Activated B cell treated with CpG ODN at 0.5 μM for 24 hours (primary cell): ENCODE measurements at regions of chr9 and their contacts with region 1.

Region 1: DNA sequence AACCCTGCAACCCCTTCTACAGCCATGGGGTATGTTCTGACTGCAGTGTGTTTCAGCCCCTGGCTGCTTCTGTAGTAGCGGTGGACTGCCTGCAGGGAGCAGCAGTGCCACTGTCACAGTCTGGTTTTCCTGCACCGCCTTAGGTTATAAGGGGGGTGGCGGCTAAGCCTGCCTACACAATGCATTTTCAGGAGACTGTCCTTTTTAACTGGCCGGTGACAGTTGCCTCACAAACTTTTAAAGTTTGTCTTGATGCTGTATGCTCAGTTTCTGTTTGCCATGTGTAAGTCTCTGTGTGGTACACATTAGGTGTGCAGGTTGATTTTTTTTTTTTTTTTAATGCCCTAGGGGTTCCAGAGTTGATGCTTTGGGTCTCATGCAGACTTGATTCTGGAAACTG is 53.0 kb downstream of the NUP214 start:
- DNase-seq: peak; percentile 61
- ATAC-seq: peak; percentile 97
- H3K4me3 Mint-ChIP-seq: no peak overlapping the region
- H3K27ac Mint-ChIP-seq: no peak overlapping the region
- H3K4me1 Mint-ChIP-seq: peaks cover 44% of the 10 kb centered on the region
- H3K27me3 Mint-ChIP-seq: no peaks in the 10 kb centered on the region
- CTCF ChIP-seq: peak; percentile 54

Region 2: DNA sequence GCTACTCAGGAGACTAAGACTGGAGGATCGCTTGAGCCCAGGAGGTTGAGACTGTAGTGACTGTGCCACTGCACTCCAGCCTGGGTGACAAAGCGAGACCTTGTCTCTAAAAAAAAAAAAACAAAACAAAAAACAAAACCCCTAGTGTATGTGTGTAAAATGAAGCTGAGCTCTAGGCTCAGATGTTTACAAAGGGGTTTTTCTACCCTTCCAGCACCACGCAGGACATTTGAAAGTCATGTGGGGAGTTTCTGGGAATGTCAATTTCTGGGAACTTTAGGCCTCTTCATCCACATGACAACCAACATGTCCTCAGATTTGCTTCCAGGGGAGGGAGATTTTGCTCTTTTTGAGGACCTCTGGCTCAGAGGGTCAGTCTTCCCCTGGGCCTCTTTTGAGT is 124.5 kb before region 1 on chr9:
- CTCF ChIA-PET with region 1: interaction called, 3 read pairs
- POLR2A ChIA-PET with region 1: no interaction called
- intact Hi-C with region 1: loop called (anchors 2 kb)
- DNase-seq: no peak
- ATAC-seq: no peak
- H3K4me3 Mint-ChIP-seq: no peak overlapping the region
- H3K27ac Mint-ChIP-seq: no peak overlapping the region
- H3K4me1 Mint-ChIP-seq: no peaks in the 10 kb centered on the region
- H3K27me3 Mint-ChIP-seq: peaks cover 4% of the 10 kb centered on the region
- CTCF ChIP-seq: no peak

Region 3: GRCh38 chr9:131277910-131278701 is 99.7 kb after region 1 on chr9:
- CTCF ChIA-PET with region 1: interaction called, 9 read pairs
- POLR2A ChIA-PET with region 1: interaction called, 10 read pairs
- intact Hi-C with region 1: loop called (anchors 1 kb)
- DNase-seq: peak; percentile 48
- ATAC-seq: peak; percentile 48
- H3K4me3 Mint-ChIP-seq: peak overlapping the region; percentile 91
- H3K27ac Mint-ChIP-seq: peak overlapping the region; percentile 80
- H3K4me1 Mint-ChIP-seq: peaks cover 37% of the 10 kb centered on the region
- H3K27me3 Mint-ChIP-seq: peaks cover 12% of the 10 kb centered on the region
- CTCF ChIP-seq: no peak

Region 4: DNA sequence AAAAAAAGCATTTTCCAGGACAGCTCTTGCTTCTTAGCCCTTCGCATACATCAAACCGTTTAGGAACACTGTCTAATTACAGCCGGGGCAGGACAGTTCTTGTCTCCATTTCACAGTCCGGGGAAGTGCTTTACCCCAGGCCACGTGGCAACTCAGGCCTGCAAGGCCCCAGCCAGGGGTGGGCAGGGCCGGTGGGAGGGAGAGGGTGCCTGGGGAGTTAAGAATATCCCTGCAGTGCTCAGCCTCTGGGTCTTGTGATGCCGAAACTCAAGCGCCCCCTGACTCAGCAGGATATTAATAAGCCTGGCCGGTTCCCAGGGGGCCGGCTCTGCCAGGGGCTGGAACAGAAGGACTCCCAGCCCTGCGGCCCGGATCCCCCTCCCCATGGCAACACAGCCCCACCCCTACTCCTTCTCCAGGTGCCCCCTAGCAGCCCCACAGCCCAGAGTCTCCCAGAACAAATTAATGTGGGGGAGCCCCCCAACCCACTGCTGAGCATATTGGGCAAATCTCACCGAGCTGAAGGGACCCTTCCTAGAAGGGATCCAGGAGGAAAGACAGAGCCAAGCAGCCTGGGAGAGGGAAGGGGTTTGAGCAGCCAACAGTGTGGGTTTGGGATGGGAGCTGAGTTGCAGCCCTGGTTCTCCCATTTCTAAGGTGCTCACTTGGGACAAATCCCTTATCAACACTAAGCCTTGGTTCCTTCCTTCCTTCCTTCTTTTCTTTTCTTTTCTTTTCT is 156.4 kb after region 1 on chr9:
- CTCF ChIA-PET with region 1: interaction called, 198 read pairs
- POLR2A ChIA-PET with region 1: interaction called, 11 read pairs
- intact Hi-C with region 1: loop called (anchors 1 kb)
- DNase-seq: no peak
- ATAC-seq: no peak
- H3K4me3 Mint-ChIP-seq: no peak overlapping the region
- H3K27ac Mint-ChIP-seq: no peak overlapping the region
- H3K4me1 Mint-ChIP-seq: peaks cover 3% of the 10 kb centered on the region
- H3K27me3 Mint-ChIP-seq: peaks cover 5% of the 10 kb centered on the region
- CTCF ChIP-seq: no peak

Region 5: DNA sequence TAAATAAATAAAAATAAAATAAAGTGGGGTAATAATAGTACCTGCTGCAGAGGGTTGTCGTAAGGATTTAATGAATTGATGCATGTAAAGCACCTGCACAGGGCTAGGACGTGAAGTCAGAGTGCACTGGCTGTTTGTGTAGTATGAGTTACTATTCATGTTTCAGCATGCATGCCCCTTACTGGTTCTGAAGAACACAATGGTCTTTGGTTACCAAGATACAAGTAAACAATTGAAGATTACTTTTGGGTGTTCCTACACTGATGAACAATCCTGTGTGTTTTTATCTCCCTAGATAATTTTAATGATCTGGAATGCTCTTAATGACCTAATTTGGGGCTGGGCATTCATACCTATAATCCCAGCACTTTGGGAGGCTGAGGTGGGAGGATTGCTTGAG is 192.3 kb after region 1 on chr9:
- CTCF ChIA-PET with region 1: no interaction called
- POLR2A ChIA-PET with region 1: interaction called, 10 read pairs
- intact Hi-C with region 1: no loop called
- DNase-seq: no peak
- ATAC-seq: no peak
- H3K4me3 Mint-ChIP-seq: no peak overlapping the region
- H3K27ac Mint-ChIP-seq: no peak overlapping the region
- H3K4me1 Mint-ChIP-seq: peaks cover 22% of the 10 kb centered on the region
- H3K27me3 Mint-ChIP-seq: no peaks in the 10 kb centered on the region
- CTCF ChIP-seq: no peak